Activated CD4-positive, alpha-beta memory T cell treated with anti-CD3 and anti-CD28 coated beads, Interleukin-2, amount 10 ng/mL, durations not matched to agents 7 days and 5 days (primary cell): ENCODE measurements at regions of chr18 and their contacts with region 1.

Region 1: GRCh38 chr18:2958819-2959298 is 54.1 kb downstream of the LPIN2 start:
- DNase-seq: peak; percentile 67
- H3K4me3 Mint-ChIP-seq: peak overlapping the region; percentile 73
- H3K27ac Mint-ChIP-seq: peak overlapping the region; percentile 99
- H3K4me1 Mint-ChIP-seq: peaks cover 89% of the 10 kb centered on the region
- H3K27me3 Mint-ChIP-seq: no peaks in the 10 kb centered on the region

Region 2: DNA sequence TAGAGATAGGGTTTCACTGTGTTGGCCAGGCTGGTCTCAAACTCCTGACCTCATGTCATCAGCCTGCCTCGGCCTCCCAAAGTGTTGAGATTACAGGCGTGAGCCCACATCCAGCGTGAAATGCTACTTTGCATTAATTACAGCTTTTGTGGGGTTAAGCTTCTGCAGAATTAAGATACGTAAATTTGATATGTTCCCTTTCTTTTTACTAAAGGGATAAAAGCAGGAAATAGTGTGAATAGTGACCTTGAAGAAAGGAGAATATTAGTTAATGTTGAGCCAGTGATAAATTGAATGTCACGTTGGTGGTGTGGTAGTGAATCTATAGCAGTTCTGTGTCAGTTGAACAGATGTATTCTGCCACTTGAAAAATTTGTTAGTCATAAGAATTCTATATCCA is 286.4 kb before region 1 on chr18:
- CTCF ChIA-PET with region 1: no interaction called
- POLR2A ChIA-PET with region 1: no interaction called
- DNase-seq: no peak
- H3K4me3 Mint-ChIP-seq: no peak overlapping the region
- H3K27ac Mint-ChIP-seq: no peak overlapping the region
- H3K4me1 Mint-ChIP-seq: peaks cover 51% of the 10 kb centered on the region
- H3K27me3 Mint-ChIP-seq: no peaks in the 10 kb centered on the region

Region 3: GRCh38 chr18:2741651-2742050 is 217.2 kb before region 1 on chr18:
- CTCF ChIA-PET with region 1: no interaction called
- POLR2A ChIA-PET with region 1: no interaction called
- DNase-seq: no peak
- H3K4me3 Mint-ChIP-seq: no peak overlapping the region
- H3K27ac Mint-ChIP-seq: no peak overlapping the region
- H3K4me1 Mint-ChIP-seq: peaks cover 2% of the 10 kb centered on the region
- H3K27me3 Mint-ChIP-seq: no peaks in the 10 kb centered on the region

Region 4: DNA sequence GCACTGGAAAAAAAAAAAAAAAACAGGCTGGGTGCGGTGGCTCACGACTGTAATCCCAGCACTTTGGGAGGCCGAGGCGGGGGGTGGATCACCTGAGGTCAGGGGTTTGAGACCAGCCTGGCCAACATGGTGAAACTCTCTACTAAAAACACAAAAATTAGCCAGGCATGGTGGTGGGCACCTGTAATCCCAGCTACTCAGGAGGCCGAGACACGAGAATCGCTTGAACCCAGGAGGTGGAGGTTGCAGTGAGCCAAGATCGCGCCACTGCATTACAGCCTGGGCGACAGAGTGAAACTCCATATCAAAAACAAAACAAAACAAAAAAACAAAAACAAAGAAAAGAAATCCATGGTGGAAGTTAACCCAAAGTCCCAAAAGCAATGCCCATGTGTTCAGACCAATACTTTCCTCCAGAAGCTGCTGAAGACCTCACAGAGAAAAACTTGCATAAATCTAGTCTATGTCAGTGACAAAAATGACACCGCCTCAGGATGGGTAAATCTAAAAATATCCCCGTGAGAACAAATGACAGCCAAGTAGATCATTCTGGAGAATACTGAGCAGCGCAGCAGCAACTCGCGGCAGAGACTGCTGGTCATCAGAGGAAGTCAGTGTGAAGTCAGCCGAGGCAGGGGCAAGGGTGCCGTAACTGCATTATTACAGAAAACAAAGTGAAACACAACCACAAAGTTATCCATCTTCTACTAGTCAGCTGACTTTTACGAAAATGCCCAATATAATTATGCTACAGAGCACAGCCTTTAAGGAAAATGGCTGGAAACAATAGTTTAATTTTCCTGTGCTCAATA is 13.1 kb after region 1 on chr18:
- CTCF ChIA-PET with region 1: interaction called, 65 read pairs
- POLR2A ChIA-PET with region 1: interaction called, 255 read pairs
- DNase-seq: peak; percentile 82
- H3K4me3 Mint-ChIP-seq: peak overlapping the region; percentile 69
- H3K27ac Mint-ChIP-seq: peak overlapping the region; percentile 94
- H3K4me1 Mint-ChIP-seq: peaks cover 83% of the 10 kb centered on the region
- H3K27me3 Mint-ChIP-seq: no peaks in the 10 kb centered on the region

Region 5: DNA sequence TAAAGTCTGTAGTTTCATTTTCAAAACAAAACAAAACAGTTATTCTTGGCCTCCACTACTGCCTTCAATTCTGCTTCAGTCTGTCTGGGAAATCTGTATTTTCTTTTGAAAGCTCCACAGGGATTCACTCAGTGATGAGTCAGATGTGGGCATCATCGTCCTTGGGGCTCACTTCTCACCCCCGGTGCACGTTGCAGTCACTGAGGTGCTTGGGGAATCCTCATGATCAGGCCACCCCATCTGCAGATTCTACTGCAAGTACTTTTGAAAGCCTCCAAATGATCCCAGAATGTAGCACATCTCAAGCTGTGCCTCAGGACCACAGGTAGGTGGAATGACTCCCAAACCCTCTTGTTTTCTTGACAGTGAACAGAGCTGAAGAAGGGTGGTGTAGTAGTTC is 19.8 kb after region 1 on chr18:
- CTCF ChIA-PET with region 1: interaction called, 65 read pairs
- POLR2A ChIA-PET with region 1: interaction called, 255 read pairs
- DNase-seq: no peak
- H3K4me3 Mint-ChIP-seq: peak overlapping the region; percentile 63
- H3K27ac Mint-ChIP-seq: peak overlapping the region; percentile 78
- H3K4me1 Mint-ChIP-seq: peaks cover 83% of the 10 kb centered on the region
- H3K27me3 Mint-ChIP-seq: no peaks in the 10 kb centered on the region

Region 6: GRCh38 chr18:3027370-3027891 is 68.6 kb after region 1 on chr18:
- CTCF ChIA-PET with region 1: no interaction called
- POLR2A ChIA-PET with region 1: no interaction called
- DNase-seq: no peak
- H3K4me3 Mint-ChIP-seq: no peak overlapping the region
- H3K27ac Mint-ChIP-seq: no peak overlapping the region
- H3K4me1 Mint-ChIP-seq: no peaks in the 10 kb centered on the region
- H3K27me3 Mint-ChIP-seq: no peaks in the 10 kb centered on the region